ENCODE measurements at regions of chr11 and their contacts with region 1.

Region 1: GRCh38 chr11:65711785-65712632 is at the start of gene KAT5:
- DNase-seq: peak; percentile 93 to 99
- ATAC-seq: peak; percentile 88 to 92
- H3K4me3 ChIP-seq: peak within 1 kb of the TSS; percentile 60
- H3K27ac ChIP-seq: peak within 1 kb of the TSS; percentile 97 to 99
- H3K4me1 ChIP-seq: peaks cover 15% of the 10 kb centered on the region
- CTCF ChIP-seq: peak; percentile 94
- EP300 ChIP-seq: no peak
- POLR2A ChIP-seq: peak; percentile 33; the same call in 1 of the 2 replicates
- RAD21 ChIP-seq: peak; percentile 93 to 94
- polyA plus RNA-seq, gene KAT5: 25.8 and 34.6 TPM in 2 replicates

Region 2: GRCh38 chr11:65695456-65696241 is 16.4 kb before region 1 on chr11:
- CTCF ChIA-PET with region 1: interaction called, 36 read pairs
- POLR2A ChIA-PET with region 1: no interaction called
- DNase-seq: no peak
- ATAC-seq: no peak
- H3K4me3 ChIP-seq: no peak overlapping the region
- H3K27ac ChIP-seq: no peak overlapping the region
- H3K4me1 ChIP-seq: no peaks in the 10 kb centered on the region
- CTCF ChIP-seq: no peak
- EP300 ChIP-seq: no peak
- POLR2A ChIP-seq: no peak
- RAD21 ChIP-seq: no peak

Region 3: GRCh38 chr11:65766535-65766934 is 54.5 kb after region 1 on chr11:
- CTCF ChIA-PET with region 1: interaction called, 14 read pairs
- POLR2A ChIA-PET with region 1: interaction called, 3 read pairs
- DNase-seq: no peak
- ATAC-seq: no peak
- H3K4me3 ChIP-seq: no peak overlapping the region
- H3K27ac ChIP-seq: no peak overlapping the region
- H3K4me1 ChIP-seq: peaks cover 9% of the 10 kb centered on the region; the same call in 2 of the 3 replicates
- CTCF ChIP-seq: no peak
- EP300 ChIP-seq: no peak
- POLR2A ChIP-seq: no peak
- RAD21 ChIP-seq: no peak

Region 4: GRCh38 chr11:65810046-65810868 is 98.2 kb after region 1 on chr11:
- CTCF ChIA-PET with region 1: interaction called, 222 read pairs
- POLR2A ChIA-PET with region 1: no interaction called
- DNase-seq: peak in 1 of 2 experiments; percentile 32
- ATAC-seq: peak; percentile 54 to 68; a peak in 3 of 6 replicates
- H3K4me3 ChIP-seq: no peak overlapping the region
- H3K27ac ChIP-seq: no peak overlapping the region
- H3K4me1 ChIP-seq: no peaks in the 10 kb centered on the region
- CTCF ChIP-seq: no peak
- EP300 ChIP-seq: no peak
- POLR2A ChIP-seq: 0 out of 2 replicates have a peak, but pooled peaks have one; percentile 4
- RAD21 ChIP-seq: peak in 1 of 2 experiments; percentile 25; a peak in 2 of 5 replicates

Region 5: GRCh38 chr11:65850831-65851811 is 139.1 kb after region 1 on chr11:
- CTCF ChIA-PET with region 1: interaction called, 17 read pairs
- POLR2A ChIA-PET with region 1: interaction called, 3 read pairs
- DNase-seq: peak in 1 of 2 experiments; percentile 72
- ATAC-seq: peak; percentile 33 to 60
- H3K4me3 ChIP-seq: no peak overlapping the region
- H3K27ac ChIP-seq: no peak overlapping the region
- H3K4me1 ChIP-seq: peaks cover 21% of the 10 kb centered on the region
- CTCF ChIP-seq: peak; percentile 35; the same call in 2 of the 3 replicates
- EP300 ChIP-seq: no peak
- POLR2A ChIP-seq: no peak
- RAD21 ChIP-seq: no peak

Region 6: GRCh38 chr11:66317723-66318599 is 606.0 kb after region 1 on chr11:
- CTCF ChIA-PET with region 1: no interaction called
- POLR2A ChIA-PET with region 1: no interaction called
- DNase-seq: no peak
- ATAC-seq: peak; percentile 6 to 19; a peak in 2 of 6 replicates
- H3K4me3 ChIP-seq: no peak overlapping the region
- H3K27ac ChIP-seq: peak overlapping the region; percentile 62 to 79
- H3K4me1 ChIP-seq: peaks cover 23% of the 10 kb centered on the region
- CTCF ChIP-seq: no peak
- EP300 ChIP-seq: no peak
- POLR2A ChIP-seq: no peak
- RAD21 ChIP-seq: no peak

Measured in A549 (cell line).